ENCODE measurements at regions of chr18 and their contacts with region 1.

Region 1: GRCh38 chr18:11733031-11733430 is 44.0 kb downstream of the GNAL start:
- DNase-seq: peak; percentile 26 to 86 (median 75)
- H3K4me3 ChIP-seq: peak overlapping the region in 45 of 59 donors; percentile 4 to 62 (median 35)
- H3K27ac ChIP-seq: no peak overlapping the region
- H3K27me3 ChIP-seq: peaks cover 0 to 26% (median 2%) of the 10 kb centered on the region in 45 donors
- CTCF ChIP-seq: peak; percentile 61 to 95 (median 90)

Region 2: GRCh38 chr18:11669271-11669947 is 63.6 kb before region 1 on chr18:
- intact Hi-C with region 1: loop called in 1 of 2 experiments (anchors 10 kb)
- DNase-seq: no peak
- H3K4me3 ChIP-seq: no peak overlapping the region
- H3K27ac ChIP-seq: no peak overlapping the region
- H3K27me3 ChIP-seq: peaks cover 0 to 27% (median under 1%) of the 10 kb centered on the region in 45 donors
- CTCF ChIP-seq: no peak

Region 3: GRCh38 chr18:11688989-11689668 is 43.9 kb before region 1 on chr18 and contains the start of gene GNAL:
- intact Hi-C with region 1: no loop called
- DNase-seq: peak; percentile 36 to 82 (median 68)
- H3K4me3 ChIP-seq: peak within 1 kb of the TSS; percentile 43 to 82 (median 63)
- H3K27ac ChIP-seq: peak within 1 kb of the TSS in 21 of 59 donors; percentile 6 to 77 (median 38)
- H3K27me3 ChIP-seq: peaks cover 0 to 57% (median 18%) of the 10 kb centered on the region in 45 donors
- CTCF ChIP-seq: peak in 3 of 56 donors; percentile 14 to 29 (median 22)
- total RNA-seq, gene GNAL: 9.4 to 88.3 (median 37.0) TPM

Region 4: GRCh38 chr18:11851146-11851805 is 118.2 kb after region 1 on chr18 and contains the start of gene CHMP1B:
- intact Hi-C with region 1: loop called in 1 of 2 experiments (anchors 10 kb)
- DNase-seq: peak; percentile 98 to 99 (median 98)
- H3K4me3 ChIP-seq: peak within 1 kb of the TSS; percentile 64 to 100 (median 94)
- H3K27ac ChIP-seq: peak within 1 kb of the TSS; percentile 66 to 98 (median 92)
- H3K27me3 ChIP-seq: no peaks in the 10 kb centered on the region
- CTCF ChIP-seq: peak in 29 of 56 donors; percentile 4 to 62 (median 28)
- total RNA-seq, gene CHMP1B: 26.5 to 54.3 (median 43.5) TPM

Region 5: DNA sequence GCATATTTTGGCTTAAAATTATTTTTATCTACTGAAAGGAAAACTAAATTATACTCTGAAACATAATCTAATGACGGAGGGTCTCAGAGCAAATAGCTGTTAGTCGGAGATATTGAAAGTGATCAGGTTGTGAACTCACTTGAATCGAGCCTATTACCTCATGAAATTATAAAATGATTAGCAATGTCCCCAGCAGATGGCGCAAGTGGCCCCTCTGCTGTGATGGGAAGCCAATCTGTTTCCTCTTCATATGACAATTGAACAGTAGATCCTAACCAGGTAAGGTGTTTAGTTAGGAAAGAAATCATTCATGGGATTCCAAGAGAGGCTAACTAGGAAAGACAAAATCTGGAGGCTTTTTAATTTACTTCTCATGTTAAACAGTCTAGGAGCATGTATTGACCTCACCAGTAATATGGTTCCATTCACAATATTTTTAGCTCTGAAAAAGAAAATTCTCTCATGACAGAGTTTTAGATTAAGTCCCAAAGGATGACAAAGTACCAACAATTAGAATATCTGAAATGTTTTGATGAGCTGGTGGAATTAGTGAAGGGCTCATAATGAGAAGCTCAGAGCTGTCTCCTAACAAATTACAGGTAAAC is 204.9 kb after region 1 on chr18:
- intact Hi-C with region 1: loop called in 1 of 2 experiments (anchors 10 kb)
- DNase-seq: peak; percentile 56 to 83 (median 70)
- H3K4me3 ChIP-seq: no peak overlapping the region
- H3K27ac ChIP-seq: peak overlapping the region in 1 of 59 donors; percentile 49
- H3K27me3 ChIP-seq: no peaks in the 10 kb centered on the region
- CTCF ChIP-seq: peak; percentile 72 to 97 (median 86)

Region 6: DNA sequence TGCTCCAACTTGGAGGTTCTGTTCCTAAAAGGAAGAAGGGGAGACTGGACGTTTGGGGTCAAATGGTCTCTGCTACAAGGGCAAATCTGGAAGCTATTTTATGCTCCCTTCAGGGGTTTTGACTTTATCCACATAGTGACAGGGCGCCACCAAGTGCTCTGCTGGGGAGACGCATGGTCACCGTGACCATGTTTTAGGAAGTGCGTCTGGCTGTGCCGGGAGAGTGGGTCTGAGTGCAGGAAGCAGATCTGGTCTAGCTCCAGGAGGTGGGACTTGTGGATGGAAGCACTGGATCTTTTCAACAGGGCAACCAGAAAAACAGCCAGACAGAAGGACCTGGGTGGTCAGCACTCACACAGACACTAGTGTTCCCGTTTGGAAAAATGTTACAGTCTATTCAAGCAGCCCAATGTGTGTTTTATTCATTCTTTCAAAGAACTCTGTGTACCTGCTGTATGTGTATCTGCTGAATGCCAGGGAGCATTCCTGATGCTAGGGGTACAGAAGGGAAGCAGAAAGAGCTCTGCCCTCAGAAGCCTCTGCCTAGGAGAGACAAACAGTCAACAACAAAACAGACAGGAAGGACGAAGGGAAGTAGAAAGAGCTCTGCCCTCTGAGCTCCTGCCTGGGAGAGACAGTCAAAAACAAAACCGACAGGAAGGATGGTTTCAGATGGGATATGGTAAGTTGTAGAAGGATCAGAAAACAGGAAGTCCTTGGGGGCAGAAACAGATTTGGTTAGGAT is 262.6 kb after region 1 on chr18:
- intact Hi-C with region 1: loop called in 1 of 2 experiments (anchors 5 kb)
- DNase-seq: peak in 6 of 10 donors; percentile 54 to 69 (median 61)
- H3K4me3 ChIP-seq: peak overlapping the region in 1 of 59 donors; percentile 13
- H3K27ac ChIP-seq: peak overlapping the region in 15 of 59 donors; percentile 1 to 59 (median 29)
- H3K27me3 ChIP-seq: peaks cover 0 to 3% (median 0%) of the 10 kb centered on the region in 45 donors
- CTCF ChIP-seq: peak in 54 of 56 donors; percentile 41 to 78 (median 66)

Region 7: GRCh38 chr18:12038639-12039417 is 305.8 kb after region 1 on chr18:
- intact Hi-C with region 1: loop called (anchors 5 kb)
- DNase-seq: peak; percentile 68 to 88 (median 77)
- H3K4me3 ChIP-seq: peak overlapping the region; percentile 37 to 83 (median 64)
- H3K27ac ChIP-seq: peak overlapping the region in 9 of 59 donors; percentile 13 to 58 (median 43)
- H3K27me3 ChIP-seq: no peaks in the 10 kb centered on the region
- CTCF ChIP-seq: peak; percentile 90 to 100 (median 99)